ENCODE measurements at regions of chr1 and their contacts with region 1.

Region 1: DNA sequence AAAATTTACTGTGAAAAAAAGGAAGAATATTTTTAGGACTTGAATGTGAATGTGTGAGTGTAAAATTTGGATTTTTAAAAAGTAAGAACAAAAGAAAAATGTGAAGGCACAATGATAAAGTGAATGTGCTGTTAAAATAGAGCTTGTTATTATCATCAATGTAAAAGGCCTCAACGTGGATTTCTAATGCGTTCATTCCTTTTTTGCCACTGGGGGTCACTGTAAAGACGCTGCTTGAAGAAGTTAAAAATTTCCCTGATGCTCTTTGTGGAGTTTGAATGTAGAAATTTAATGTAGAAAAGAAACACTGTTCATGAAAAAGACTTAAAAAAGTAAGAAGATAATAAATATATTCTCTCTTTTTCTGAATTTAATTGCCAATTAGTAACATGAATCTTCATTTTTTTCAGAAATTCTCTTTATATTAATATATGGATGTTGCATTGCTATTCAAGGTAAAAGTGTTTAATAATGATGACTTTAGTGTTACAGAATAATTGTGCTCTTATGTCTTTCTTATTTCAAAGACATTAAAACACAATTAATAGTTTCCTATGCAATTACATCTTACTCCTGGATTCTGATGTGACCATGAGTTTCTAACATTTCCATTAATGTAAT is 161.5 kb downstream of the DNM3 start:
- DNase-seq: peak; percentile 66
- ATAC-seq: peak; percentile 41
- H3K4me3 ChIP-seq: no peak overlapping the region
- H3K4me3 Mint-ChIP-seq: no peak overlapping the region
- H3K27ac ChIP-seq: no peak overlapping the region
- H3K27ac Mint-ChIP-seq: no peak overlapping the region
- H3K4me1 ChIP-seq: no peaks in the 10 kb centered on the region
- H3K4me1 Mint-ChIP-seq: no peaks in the 10 kb centered on the region
- H3K27me3 ChIP-seq: no peaks in the 10 kb centered on the region
- H3K27me3 Mint-ChIP-seq: no peaks in the 10 kb centered on the region
- CTCF ChIP-seq: peak; percentile 81

Region 2: GRCh38 chr1:171801487-171801891 is 201.3 kb before region 1 on chr1:
- CTCF ChIA-PET with region 1: interaction called, 20 read pairs
- POLR2A ChIA-PET with region 1: no interaction called
- intact Hi-C with region 1: no loop called
- DNase-seq: peak; percentile 38
- ATAC-seq: peak; percentile 51
- H3K4me3 ChIP-seq: no peak overlapping the region
- H3K4me3 Mint-ChIP-seq: no peak overlapping the region
- H3K27ac ChIP-seq: no peak overlapping the region
- H3K27ac Mint-ChIP-seq: no peak overlapping the region
- H3K4me1 ChIP-seq: peaks cover 7 to 11% of the 10 kb centered on the region in 2 donors
- H3K4me1 Mint-ChIP-seq: peaks cover 15% of the 10 kb centered on the region
- H3K27me3 ChIP-seq: no peaks in the 10 kb centered on the region
- H3K27me3 Mint-ChIP-seq: no peaks in the 10 kb centered on the region
- CTCF ChIP-seq: peak; percentile 82

Region 3: GRCh38 chr1:172089768-172090510 is 87.1 kb after region 1 on chr1:
- CTCF ChIA-PET with region 1: interaction called, 4 read pairs
- POLR2A ChIA-PET with region 1: no interaction called
- intact Hi-C with region 1: loop called (anchors 2 kb)
- DNase-seq: peak; percentile 75
- ATAC-seq: peak; percentile 80
- H3K4me3 ChIP-seq: peak overlapping the region in 1 of 5 experiments; percentile 7
- H3K4me3 Mint-ChIP-seq: no peak overlapping the region
- H3K27ac ChIP-seq: no peak overlapping the region
- H3K27ac Mint-ChIP-seq: no peak overlapping the region
- H3K4me1 ChIP-seq: no peaks in the 10 kb centered on the region
- H3K4me1 Mint-ChIP-seq: peaks cover 9% of the 10 kb centered on the region
- H3K27me3 ChIP-seq: no peaks in the 10 kb centered on the region
- H3K27me3 Mint-ChIP-seq: no peaks in the 10 kb centered on the region
- CTCF ChIP-seq: peak; percentile 84

Region 4: DNA sequence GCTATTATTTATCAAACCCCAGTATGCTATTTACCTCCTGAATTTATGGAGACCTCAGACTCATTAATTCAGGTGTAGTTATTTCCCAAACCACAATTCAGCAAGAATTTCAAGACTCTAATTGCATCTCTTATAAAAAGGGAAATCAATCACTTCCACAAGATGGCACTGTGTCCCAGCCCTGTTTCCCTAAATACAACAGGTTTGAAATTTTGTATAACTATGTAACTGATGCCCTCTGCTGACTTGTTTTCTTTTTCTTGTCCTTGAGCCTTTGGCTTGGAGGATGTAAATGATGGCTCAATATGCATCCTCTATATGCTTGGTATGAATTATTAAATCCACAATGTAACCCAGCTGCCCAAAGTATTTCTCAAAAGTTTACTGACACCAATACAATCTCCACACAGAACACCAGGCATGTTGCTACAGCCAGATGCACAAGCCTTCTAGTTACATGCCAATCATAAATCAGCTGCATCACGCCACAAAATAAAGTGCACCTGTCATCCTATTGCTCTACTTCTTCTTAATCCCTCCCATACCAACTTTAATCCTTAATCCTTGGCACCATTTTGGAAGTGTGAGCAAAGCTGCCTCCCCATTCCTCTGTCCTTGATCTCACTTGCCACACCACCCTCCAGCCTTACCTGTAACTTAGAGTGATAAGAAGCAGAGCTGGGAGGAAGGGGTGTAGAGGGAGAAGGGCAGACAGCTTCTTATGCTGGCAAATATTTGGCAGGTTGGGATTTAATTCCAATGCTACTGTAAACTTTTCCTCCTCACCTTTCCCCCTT is 426.7 kb after region 1 on chr1:
- CTCF ChIA-PET with region 1: interaction called, 54 read pairs
- POLR2A ChIA-PET with region 1: no interaction called
- intact Hi-C with region 1: loop called (anchors 1 kb)
- DNase-seq: peak; percentile 71
- ATAC-seq: peak; percentile 76
- H3K4me3 ChIP-seq: no peak overlapping the region
- H3K4me3 Mint-ChIP-seq: no peak overlapping the region
- H3K27ac ChIP-seq: no peak overlapping the region
- H3K27ac Mint-ChIP-seq: no peak overlapping the region
- H3K4me1 ChIP-seq: peaks cover 10 to 12% of the 10 kb centered on the region in 2 donors
- H3K4me1 Mint-ChIP-seq: peaks cover 14% of the 10 kb centered on the region
- H3K27me3 ChIP-seq: no peaks in the 10 kb centered on the region
- H3K27me3 Mint-ChIP-seq: no peaks in the 10 kb centered on the region
- CTCF ChIP-seq: peak; percentile 71

Region 5: GRCh38 chr1:172719694-172720138 is 716.9 kb after region 1 on chr1:
- CTCF ChIA-PET with region 1: interaction called, 24 read pairs
- POLR2A ChIA-PET with region 1: no interaction called
- intact Hi-C with region 1: loop called (anchors 1 kb)
- DNase-seq: peak; percentile 55
- ATAC-seq: peak; percentile 56
- H3K4me3 ChIP-seq: no peak overlapping the region
- H3K4me3 Mint-ChIP-seq: no peak overlapping the region
- H3K27ac ChIP-seq: no peak overlapping the region
- H3K27ac Mint-ChIP-seq: no peak overlapping the region
- H3K4me1 ChIP-seq: peaks cover 3 to 5% of the 10 kb centered on the region in 2 donors
- H3K4me1 Mint-ChIP-seq: peaks cover 7% of the 10 kb centered on the region
- H3K27me3 ChIP-seq: no peaks in the 10 kb centered on the region
- H3K27me3 Mint-ChIP-seq: peaks cover 3% of the 10 kb centered on the region
- CTCF ChIP-seq: peak; percentile 90

Measured in B cell (primary cell).